A549 (cell line): ENCODE measurements at regions of chr19 and their contacts with region 1.

Region 1: GRCh38 chr19:48102870-48103751 is 7.5 kb downstream of the PLA2G4C start:
- DNase-seq: peak; percentile 76 to 85
- ATAC-seq: peak; percentile 41 to 44; a peak in 3 of 6 replicates
- H3K4me3 ChIP-seq: no peak overlapping the region
- H3K27ac ChIP-seq: no peak overlapping the region
- H3K4me1 ChIP-seq: peaks cover 7% of the 10 kb centered on the region
- CTCF ChIP-seq: peak; percentile 78
- EP300 ChIP-seq: no peak
- POLR2A ChIP-seq: no peak
- RAD21 ChIP-seq: peak; percentile 66 to 84

Region 2: DNA sequence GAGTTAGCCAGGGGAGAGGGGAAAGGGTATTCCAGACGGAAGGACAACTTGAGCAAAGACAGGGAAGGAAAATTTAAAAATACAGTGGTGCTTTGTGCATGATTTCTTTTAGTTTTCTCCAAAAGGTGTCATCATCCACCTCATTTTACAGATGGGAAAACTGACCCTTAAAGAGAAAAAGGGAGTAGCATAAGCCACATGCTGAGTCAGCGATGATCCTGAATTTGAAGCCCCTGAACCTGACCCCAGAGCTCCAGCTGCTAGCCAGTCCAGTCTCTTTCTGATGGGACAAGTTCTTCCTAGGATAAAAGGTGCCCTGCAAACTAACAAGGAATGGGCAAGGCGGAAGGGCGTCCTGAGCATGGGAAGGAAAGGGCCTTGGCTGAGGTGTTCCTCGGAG is 69.5 kb before region 1 on chr19:
- CTCF ChIA-PET with region 1: no interaction called
- POLR2A ChIA-PET with region 1: no interaction called
- DNase-seq: no peak
- ATAC-seq: no peak
- H3K4me3 ChIP-seq: no peak overlapping the region
- H3K27ac ChIP-seq: no peak overlapping the region
- H3K4me1 ChIP-seq: no peaks in the 10 kb centered on the region
- CTCF ChIP-seq: no peak
- EP300 ChIP-seq: no peak
- POLR2A ChIP-seq: no peak
- RAD21 ChIP-seq: no peak

Region 3: DNA sequence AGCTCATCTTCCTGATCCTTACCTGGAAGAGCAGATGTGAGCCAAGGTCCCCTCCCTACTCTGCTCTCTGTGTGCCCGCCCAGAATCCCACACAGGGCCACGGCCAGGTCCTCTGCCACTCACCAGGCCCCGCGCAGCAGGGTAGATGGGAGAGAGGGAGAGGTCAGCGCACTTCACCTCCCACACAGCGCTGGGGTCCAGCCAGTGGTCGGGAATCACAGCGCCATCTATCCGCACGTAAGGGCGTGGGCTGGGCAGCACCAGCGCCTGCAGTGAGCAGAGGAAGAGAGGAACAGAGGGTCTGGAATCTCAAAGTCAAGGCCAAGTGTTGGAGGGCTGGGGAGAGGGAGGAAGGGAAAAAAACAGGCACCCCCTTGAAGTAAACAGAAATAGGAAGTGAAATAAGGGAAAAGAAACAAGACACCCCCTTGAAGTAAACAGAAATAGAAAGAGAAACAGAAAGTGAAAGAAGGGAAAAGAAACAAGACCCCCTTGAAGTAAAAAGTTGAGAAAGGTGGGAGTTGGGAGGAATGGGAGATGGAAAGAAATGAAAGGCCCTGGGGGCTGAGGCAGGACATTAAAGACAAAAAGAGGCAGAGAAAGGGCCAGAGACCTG is 14.5 kb after region 1 on chr19:
- CTCF ChIA-PET with region 1: interaction called, 111 read pairs
- POLR2A ChIA-PET with region 1: no interaction called
- DNase-seq: no peak
- ATAC-seq: peak; percentile 8 to 27; a peak in 1 of 6 replicates
- H3K4me3 ChIP-seq: no peak overlapping the region
- H3K27ac ChIP-seq: no peak overlapping the region
- H3K4me1 ChIP-seq: 0 out of 3 replicates have a peak, but pooled peaks cover 3% of the 10 kb centered on the region
- CTCF ChIP-seq: peak; percentile 7; the same call in 1 of the 3 replicates
- EP300 ChIP-seq: no peak
- POLR2A ChIP-seq: no peak
- RAD21 ChIP-seq: no peak

Region 4: DNA sequence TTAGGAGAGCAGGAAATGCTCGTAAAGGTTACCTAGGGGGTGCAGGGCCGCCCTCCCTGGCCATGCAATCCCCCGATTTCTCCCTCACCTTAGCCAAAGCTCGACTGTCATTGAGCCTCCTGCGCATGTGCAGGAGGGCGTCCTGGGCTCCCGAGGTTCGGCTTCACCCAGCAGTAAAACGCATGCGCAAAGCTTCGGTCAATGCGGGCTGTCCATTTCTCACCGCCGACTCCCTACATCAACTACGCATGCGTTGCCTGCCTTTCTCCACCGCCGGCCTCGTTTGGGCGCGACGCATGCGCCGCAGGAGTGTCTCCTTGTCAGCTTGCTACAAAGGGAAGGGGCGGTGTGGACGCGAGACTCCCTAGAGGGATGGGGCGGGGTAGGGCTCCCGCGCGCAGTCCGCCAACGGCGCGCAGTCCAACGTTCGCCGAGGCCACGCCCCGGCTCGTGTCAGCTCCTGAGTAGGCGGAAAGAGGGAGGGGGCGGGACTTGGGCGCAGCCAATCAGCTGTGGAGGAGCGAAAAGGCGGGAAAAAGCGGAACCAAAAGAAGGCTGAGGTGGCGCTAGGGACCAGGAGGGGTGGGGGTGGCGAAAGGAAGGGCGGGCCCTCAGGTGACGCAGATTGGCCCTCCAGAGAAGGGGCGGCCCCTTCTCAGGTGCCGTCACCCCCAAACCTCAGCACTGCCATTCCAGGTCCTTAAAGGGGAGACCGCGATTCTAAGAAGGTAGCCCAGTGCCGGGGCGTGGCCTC is 260.9 kb after region 1 on chr19 and contains the starts of genes SYNGR4 and TMEM143:
- CTCF ChIA-PET with region 1: no interaction called
- POLR2A ChIA-PET with region 1: no interaction called
- DNase-seq: peak; percentile 100
- ATAC-seq: peak; percentile 75 to 89
- H3K4me3 ChIP-seq: peak within 1 kb of the TSS; percentile 51
- H3K27ac ChIP-seq: peak within 1 kb of the TSS; percentile 90 to 97
- H3K4me1 ChIP-seq: peaks cover 8% of the 10 kb centered on the region
- CTCF ChIP-seq: no peak
- EP300 ChIP-seq: no peak
- POLR2A ChIP-seq: peak; percentile 70
- RAD21 ChIP-seq: no peak
- polyA plus RNA-seq, gene SYNGR4: 2.3 and 2.9 TPM in 2 replicates
- polyA plus RNA-seq, gene TMEM143: 7.4 and 7.6 TPM in 2 replicates